Activated naive CD4-positive, alpha-beta T cell treated with anti-CD3 and anti-CD28 coated beads for 36 hours (primary cell): ENCODE measurements at regions of chr1 and their contacts with region 1.

Region 1: DNA sequence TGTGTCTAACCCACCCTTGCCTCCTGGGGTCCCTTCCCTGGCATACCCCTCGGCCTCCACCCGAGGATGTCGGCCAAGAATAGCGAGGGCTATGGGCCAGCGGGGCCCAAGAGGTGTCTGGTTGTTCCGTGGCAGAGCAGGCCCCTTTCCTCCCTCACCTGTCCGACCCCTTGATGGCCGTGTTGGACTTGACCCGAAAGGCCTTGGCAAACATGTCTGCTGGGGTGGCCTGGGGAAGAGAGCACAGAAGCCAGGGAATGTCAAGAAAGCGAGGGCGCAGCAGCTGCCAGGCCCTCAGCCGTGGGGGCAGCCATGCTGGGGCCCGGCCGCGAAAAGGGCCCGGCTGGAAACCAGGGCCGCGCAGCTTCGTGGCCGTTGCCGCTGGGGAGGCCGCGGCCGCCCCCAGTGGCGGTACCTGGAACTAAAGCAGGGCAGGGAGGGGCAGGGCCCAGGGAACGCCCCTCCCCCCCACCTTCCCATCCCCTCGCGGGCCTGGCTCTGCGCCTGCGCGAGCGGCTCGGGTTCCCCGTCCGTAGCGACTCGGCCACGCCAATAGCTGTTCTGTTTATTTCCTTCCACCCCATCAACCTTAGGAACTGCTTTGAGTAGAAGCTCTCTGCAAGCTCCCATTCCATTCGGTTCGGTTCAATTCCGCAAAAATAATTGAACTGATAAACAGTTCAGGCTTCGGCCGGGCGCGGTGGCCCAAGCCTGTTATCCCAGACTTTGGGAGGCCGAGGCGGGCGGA is at the start of gene EIF2D:
- DNase-seq: peak; percentile 95
- H3K4me3 Mint-ChIP-seq: peak within 1 kb of the TSS; percentile 92
- H3K27ac Mint-ChIP-seq: peak within 1 kb of the TSS; percentile 99
- H3K4me1 Mint-ChIP-seq: peaks cover 44% of the 10 kb centered on the region
- H3K27me3 Mint-ChIP-seq: no peaks in the 10 kb centered on the region
- total RNA-seq, gene EIF2D: 116 to 122 TPM

Region 2: GRCh38 chr1:206489980-206490770 is 122.1 kb before region 1 on chr1:
- CTCF ChIA-PET with region 1: interaction called, 4 read pairs
- intact Hi-C with region 1: loop called (anchors 2 kb)
- DNase-seq: peak; percentile 87
- H3K4me3 Mint-ChIP-seq: no peak overlapping the region
- H3K27ac Mint-ChIP-seq: no peak overlapping the region
- H3K4me1 Mint-ChIP-seq: no peaks in the 10 kb centered on the region
- H3K27me3 Mint-ChIP-seq: no peaks in the 10 kb centered on the region

Region 3: DNA sequence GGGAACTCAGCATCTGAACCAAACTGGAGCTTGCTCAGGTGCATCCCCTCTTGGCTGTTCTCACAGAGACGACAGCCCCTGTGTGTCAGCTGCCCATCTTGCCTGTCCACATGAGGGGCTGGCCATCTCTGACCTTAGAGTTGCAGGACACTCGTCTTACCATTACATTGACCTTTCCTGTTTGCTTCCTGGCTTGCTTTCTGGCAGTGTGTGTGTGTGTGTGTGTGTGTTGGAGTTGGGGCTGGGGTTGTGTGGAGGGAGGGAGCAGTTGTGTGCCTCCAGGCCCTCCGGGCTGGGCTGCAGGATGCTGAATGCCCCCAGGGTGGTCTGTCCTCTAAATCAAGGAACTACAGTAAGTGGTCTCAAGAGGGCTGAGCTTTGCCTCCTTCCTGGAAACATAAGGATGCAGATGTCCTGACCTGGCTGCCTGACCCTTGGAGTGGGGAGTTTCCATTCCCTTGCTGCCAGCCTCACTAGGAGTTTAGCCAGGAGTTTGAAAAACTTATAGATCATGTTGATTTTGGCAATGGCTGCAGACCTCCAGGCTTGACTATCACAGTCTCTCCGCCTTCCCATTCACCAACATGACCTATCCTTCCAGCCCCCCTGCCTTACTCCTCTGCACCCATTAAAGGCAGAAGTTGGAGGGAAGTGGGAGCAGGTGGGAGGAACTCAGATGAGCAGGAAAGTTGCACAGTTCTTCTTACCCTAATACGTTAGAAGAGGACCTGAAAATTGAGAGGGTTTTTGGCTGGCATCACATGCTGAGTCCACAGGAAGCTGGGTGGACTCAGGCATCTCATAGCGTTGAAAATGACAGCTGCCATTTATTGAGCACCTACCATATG is 86.0 kb before region 1 on chr1:
- CTCF ChIA-PET with region 1: no interaction called
- intact Hi-C with region 1: no loop called
- DNase-seq: no peak
- H3K4me3 Mint-ChIP-seq: no peak overlapping the region
- H3K27ac Mint-ChIP-seq: no peak overlapping the region
- H3K4me1 Mint-ChIP-seq: no peaks in the 10 kb centered on the region
- H3K27me3 Mint-ChIP-seq: no peaks in the 10 kb centered on the region

Region 4: DNA sequence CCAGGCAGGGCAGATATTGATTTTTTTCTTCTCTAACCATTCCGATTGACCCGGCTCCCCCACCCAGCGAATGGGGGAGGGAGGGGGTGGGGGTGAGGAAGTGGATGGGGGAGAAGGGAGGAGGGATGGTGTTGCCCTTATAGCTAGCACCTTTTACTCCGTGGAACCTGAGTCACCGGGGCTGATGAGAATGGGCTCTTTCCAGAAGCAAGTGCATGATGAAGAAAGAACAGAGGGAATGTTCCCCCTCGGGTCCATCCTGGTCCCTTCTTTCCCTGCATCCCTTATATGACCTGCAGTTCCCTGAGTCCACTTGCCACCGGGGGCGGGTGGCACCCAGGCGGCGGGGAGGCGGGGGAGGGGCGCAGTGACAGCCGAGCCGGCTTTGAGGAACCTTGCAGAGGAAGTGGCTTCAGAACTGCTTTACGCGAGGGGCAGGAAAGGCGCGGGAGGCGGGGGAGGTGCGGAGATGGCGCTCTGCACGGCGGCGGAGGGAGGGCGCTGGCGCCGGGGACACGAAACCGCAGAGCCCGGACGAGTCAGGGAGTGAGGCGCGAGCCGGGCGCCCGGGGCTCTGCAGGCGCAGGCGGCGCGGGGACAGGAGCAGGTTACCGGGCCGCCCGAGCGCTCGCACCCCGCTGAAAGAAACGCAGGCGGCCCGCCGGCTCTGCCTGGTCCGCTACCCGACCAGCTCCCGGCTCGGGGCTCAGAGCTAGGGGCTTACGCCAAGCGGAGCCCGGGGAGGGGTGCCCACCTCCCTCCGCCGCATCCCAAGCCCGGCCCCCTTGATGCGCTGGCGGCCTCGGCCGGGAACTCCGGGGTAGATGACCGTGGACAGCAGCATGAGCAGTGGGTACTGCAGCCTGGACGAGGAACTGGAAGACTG is 55.3 kb before region 1 on chr1:
- CTCF ChIA-PET with region 1: interaction called, 4 read pairs
- intact Hi-C with region 1: loop called (anchors 1 kb)
- DNase-seq: peak; percentile 92
- H3K4me3 Mint-ChIP-seq: peak overlapping the region; percentile 96
- H3K27ac Mint-ChIP-seq: peak overlapping the region; percentile 100
- H3K4me1 Mint-ChIP-seq: peaks cover 61% of the 10 kb centered on the region
- H3K27me3 Mint-ChIP-seq: no peaks in the 10 kb centered on the region

Region 5: GRCh38 chr1:206635080-206635977 is 23.0 kb after region 1 on chr1 and contains the start of gene DYRK3:
- CTCF ChIA-PET with region 1: interaction called, 11 read pairs
- intact Hi-C with region 1: loop called (anchors 1 kb)
- DNase-seq: peak; percentile 93
- H3K4me3 Mint-ChIP-seq: peak within 1 kb of the TSS; percentile 83
- H3K27ac Mint-ChIP-seq: peak within 1 kb of the TSS; percentile 92
- H3K4me1 Mint-ChIP-seq: peaks cover 27% of the 10 kb centered on the region
- H3K27me3 Mint-ChIP-seq: peaks cover 21% of the 10 kb centered on the region
- total RNA-seq, gene DYRK3: 6.5 to 6.7 TPM

Region 6: DNA sequence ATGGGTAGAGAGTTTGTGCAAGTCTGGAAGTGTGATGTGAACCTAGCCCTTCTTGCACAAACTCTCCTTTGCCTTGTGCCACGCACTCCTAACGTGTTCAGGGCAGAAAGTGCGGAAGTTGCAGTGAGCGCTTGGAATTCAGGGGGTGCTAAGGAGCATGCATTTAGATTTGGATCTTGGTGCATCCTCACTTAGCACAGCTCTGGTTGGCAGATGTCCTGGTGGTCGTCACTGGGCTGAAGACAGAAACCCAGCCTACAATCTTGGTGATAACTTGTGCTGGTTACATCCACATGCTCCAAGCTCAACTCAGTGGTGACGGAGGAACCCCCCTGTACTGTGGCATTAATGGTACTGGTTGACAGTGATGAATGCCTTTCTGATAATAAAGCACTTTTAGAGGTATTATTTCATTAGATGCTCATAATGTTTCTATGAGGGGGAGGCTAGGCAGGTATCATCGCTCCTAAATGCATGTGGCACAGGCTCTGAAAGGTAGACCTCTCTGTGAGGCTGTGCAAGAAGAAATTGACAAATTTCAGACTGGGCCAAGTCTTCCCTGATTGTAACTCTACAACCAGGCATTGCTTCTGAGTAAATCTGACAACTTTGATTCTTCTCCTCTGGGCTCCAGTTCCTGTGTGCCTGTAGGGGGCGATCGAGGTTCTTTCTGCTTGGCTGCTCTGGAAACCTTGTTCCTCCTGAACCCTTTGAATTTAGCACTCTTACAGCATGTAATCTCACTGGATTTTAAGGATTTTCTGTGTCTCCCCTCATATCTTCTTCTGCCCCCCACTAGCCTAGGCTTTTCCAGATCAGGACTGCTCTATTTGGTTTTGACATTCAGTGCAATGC is 113.0 kb after region 1 on chr1:
- CTCF ChIA-PET with region 1: interaction called, 5 read pairs
- intact Hi-C with region 1: loop called (anchors 5 kb)
- DNase-seq: peak; percentile 84
- H3K4me3 Mint-ChIP-seq: no peak overlapping the region
- H3K27ac Mint-ChIP-seq: no peak overlapping the region
- H3K4me1 Mint-ChIP-seq: peaks cover 39% of the 10 kb centered on the region
- H3K27me3 Mint-ChIP-seq: no peaks in the 10 kb centered on the region

Region 7: DNA sequence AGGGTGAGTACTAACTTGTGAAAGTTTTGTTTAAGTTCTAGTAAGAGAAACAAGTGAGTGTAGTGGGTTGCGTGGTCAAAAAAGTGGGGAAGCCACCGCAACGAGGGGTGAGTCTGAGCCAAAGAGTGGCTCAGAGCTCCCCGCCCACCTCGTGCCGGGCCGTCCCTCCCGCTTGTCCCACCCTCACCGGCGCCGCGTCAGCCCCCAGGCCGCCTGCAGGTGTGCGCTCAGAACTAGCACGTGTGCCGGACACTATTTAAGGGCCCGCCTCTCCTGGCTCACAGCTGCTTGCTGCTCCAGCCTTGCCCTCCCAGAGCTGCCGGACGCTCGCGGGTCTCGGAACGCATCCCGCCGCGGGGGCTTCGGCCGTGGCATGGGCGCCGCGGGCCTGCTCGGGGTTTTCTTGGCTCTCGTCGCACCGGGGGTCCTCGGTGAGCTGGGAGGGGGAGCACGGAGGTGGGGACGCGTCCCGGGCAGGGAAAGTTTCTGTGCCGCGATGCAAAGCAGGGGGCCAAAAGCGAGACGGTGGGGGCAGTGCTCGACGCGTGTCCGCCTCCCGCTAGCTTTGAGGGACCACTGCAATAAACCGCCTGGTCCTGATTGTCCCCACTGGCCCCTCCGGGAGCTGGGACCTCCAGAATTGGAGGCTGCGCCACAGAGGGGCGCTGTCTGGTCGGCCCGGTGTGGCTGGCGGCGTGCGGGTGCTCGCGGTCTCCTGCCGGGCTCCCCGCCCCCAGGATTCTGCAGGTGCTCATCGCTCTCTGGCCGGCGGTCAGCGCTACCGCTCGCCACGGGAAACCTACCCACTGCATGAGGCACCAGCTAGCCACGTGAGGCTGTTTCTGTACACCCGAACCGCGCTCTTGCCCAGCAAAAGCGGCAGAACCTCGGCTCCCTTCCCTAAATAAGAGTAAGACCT is 842.0 kb after region 1 on chr1 and contains the start of gene CR2:
- CTCF ChIA-PET with region 1: no interaction called
- intact Hi-C with region 1: no loop called
- DNase-seq: peak; percentile 64
- H3K4me3 Mint-ChIP-seq: peak within 1 kb of the TSS; percentile 65
- H3K27ac Mint-ChIP-seq: no peak within 1 kb of the TSS
- H3K4me1 Mint-ChIP-seq: peaks cover 7% of the 10 kb centered on the region
- H3K27me3 Mint-ChIP-seq: peaks cover 18% of the 10 kb centered on the region
- total RNA-seq, gene CR2: 0.36 to 1.8 TPM